Astrocyte of the spinal cord (primary cell): ENCODE measurements at regions of chr9 and their contacts with region 1.

Region 1: GRCh38 chr9:35553670-35554543 is 51.2 kb upstream of the TESK1 start:
- DNase-seq: peak; percentile 79
- H3K4me3 ChIP-seq: no peak overlapping the region
- CTCF ChIP-seq: peak; percentile 75

Region 2: GRCh38 chr9:35464141-35465025 is 89.5 kb before region 1 on chr9:
- in situ Hi-C with region 1: no loop called
- DNase-seq: no peak
- H3K4me3 ChIP-seq: no peak overlapping the region
- CTCF ChIP-seq: no peak

Region 3: DNA sequence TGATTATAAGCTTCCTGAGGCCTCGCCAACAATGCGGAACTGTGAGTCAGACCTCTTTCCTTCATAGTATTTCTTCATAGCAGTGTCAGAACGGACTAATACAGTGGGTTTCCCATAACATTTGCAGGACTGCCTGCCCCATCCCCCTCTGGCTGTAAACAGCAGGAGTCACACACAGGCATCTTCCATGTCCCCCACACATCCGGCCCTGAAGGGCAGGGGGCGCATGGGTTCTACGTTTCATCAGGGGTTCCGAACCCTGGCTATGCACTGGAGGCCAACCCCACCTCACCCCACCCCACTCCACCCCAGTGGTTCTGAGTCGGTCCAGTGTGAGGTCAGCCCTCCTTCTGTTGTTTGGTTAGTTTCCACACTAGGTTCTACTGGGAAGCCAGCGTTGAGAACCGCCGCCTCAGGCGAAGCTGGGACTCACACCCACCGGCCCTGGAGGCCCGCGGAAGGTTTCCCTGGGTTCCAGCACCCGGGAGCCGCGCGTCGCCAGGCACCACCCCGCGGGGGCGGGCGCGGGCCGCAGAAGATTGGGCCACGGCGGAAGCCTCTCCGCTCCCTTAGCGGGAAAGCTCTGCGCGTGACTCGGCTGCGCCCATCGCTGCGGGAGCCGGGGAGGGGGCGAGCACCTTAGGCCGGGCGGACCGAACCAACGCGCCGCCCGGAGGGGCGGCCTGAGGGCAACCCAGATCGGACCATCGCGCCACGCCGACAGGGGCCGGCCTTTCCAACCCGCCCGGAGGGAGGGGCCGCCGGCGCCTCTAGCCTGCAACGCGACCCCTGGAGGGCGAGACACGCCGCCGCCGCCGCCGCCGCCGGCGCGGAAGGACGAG is 64.4 kb before region 1 on chr9 and contains the start of gene RUSC2:
- in situ Hi-C with region 1: loop called (anchors 10 kb)
- DNase-seq: peak; percentile 93
- H3K4me3 ChIP-seq: peak within 1 kb of the TSS; percentile 70
- CTCF ChIP-seq: peak; percentile 40